ENCODE measurements at regions of chr6 and their contacts with region 1.

Region 1: GRCh38 chr6:109009962-109010704 is 84.5 kb downstream of the SESN1 start:
- DNase-seq: peak in 1 of 3 donors; percentile 7
- H3K4me3 ChIP-seq: peak overlapping the region; percentile 78 to 99 (median 86)
- H3K4me3 Mint-ChIP-seq: peak overlapping the region; percentile 88 to 93
- H3K27ac ChIP-seq: peak overlapping the region; percentile 46 to 92
- H3K27ac Mint-ChIP-seq: peak overlapping the region; percentile 86 to 96 (median 93)
- H3K4me1 ChIP-seq: peaks cover 21 to 22% of the 10 kb centered on the region in 2 donors
- H3K4me1 Mint-ChIP-seq: peaks cover 43% of the 10 kb centered on the region
- H3K27me3 ChIP-seq: no peaks in the 10 kb centered on the region
- H3K27me3 Mint-ChIP-seq: peaks cover 0 to 2% (median 0%) of the 10 kb centered on the region in 3 donors
- CTCF ChIP-seq: no peak

Region 2: GRCh38 chr6:108966855-108967755 is 43.0 kb before region 1 on chr6:
- intact Hi-C with region 1: loop called in 1 of 2 experiments (anchors 5 kb)
- DNase-seq: peak; percentile 87 to 98 (median 88)
- H3K4me3 ChIP-seq: peak overlapping the region in 1 of 3 experiments; percentile 31
- H3K4me3 Mint-ChIP-seq: peak overlapping the region; percentile 16 to 79
- H3K27ac ChIP-seq: peak overlapping the region; percentile 18 to 59
- H3K27ac Mint-ChIP-seq: peak overlapping the region; percentile 78 to 95 (median 87)
- H3K4me1 ChIP-seq: peaks cover 33 to 34% of the 10 kb centered on the region in 2 donors
- H3K4me1 Mint-ChIP-seq: peaks cover 33% of the 10 kb centered on the region
- H3K27me3 ChIP-seq: no peaks in the 10 kb centered on the region
- H3K27me3 Mint-ChIP-seq: peaks cover 0 to 3% (median 2%) of the 10 kb centered on the region in 3 donors
- CTCF ChIP-seq: no peak

Region 3: GRCh38 chr6:109059571-109060021 is 49.5 kb after region 1 on chr6:
- intact Hi-C with region 1: loop called in 1 of 2 experiments (anchors 10 kb)
- DNase-seq: peak; percentile 44 to 69 (median 66)
- H3K4me3 ChIP-seq: peak overlapping the region in 2 of 3 experiments; percentile 16 to 58
- H3K4me3 Mint-ChIP-seq: peak overlapping the region; percentile 13 to 86
- H3K27ac ChIP-seq: peak overlapping the region in 1 of 2 donors; percentile 72
- H3K27ac Mint-ChIP-seq: peak overlapping the region; percentile 82 to 92 (median 89)
- H3K4me1 ChIP-seq: peaks cover 20 to 34% of the 10 kb centered on the region in 2 donors
- H3K4me1 Mint-ChIP-seq: peaks cover 34% of the 10 kb centered on the region
- H3K27me3 ChIP-seq: no peaks in the 10 kb centered on the region
- H3K27me3 Mint-ChIP-seq: no peaks in the 10 kb centered on the region
- CTCF ChIP-seq: no peak

Region 4: DNA sequence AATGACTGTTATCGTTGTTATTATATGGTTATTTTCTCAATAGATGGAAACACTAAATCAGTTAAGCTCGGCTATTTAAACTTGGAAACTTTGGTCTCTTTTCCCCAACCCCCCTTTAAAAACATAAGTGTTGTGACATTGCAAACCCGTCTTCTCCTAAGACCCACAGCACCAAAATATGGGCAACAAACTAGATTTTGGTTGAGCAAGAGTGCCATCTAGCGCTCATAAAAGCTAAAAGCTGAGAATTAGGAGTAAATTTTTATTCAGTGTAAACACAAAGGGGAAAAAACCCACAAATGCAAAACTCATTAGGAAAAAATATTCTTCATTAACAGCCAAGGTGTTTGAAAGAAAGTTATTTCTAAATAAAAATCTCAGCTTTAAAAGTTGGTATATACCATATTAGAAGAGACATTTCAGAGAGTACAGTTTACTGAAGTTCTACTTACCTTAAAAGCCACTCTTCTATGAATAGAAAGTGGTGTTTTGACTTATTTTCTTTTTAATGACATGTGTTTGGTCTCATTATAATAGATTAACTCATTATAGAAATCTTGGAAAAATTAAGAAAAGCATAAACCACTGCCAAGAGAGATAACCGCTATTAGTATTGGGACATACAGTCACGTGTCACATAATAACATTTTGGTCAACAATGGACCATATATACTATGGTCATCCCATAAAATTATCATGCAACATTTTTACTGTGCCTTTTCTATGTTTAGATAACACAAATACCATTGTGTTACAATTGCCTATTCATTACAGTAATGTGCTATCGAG is 63.4 kb after region 1 on chr6:
- intact Hi-C with region 1: loop called (anchors 10 kb)
- DNase-seq: peak; percentile 56 to 77 (median 68)
- H3K4me3 ChIP-seq: no peak overlapping the region
- H3K4me3 Mint-ChIP-seq: no peak overlapping the region
- H3K27ac ChIP-seq: no peak overlapping the region
- H3K27ac Mint-ChIP-seq: peak overlapping the region in 1 of 7 donors; percentile 68
- H3K4me1 ChIP-seq: peaks cover 11 to 19% of the 10 kb centered on the region in 2 donors
- H3K4me1 Mint-ChIP-seq: peaks cover 21% of the 10 kb centered on the region
- H3K27me3 ChIP-seq: no peaks in the 10 kb centered on the region
- H3K27me3 Mint-ChIP-seq: no peaks in the 10 kb centered on the region
- CTCF ChIP-seq: peak; percentile 72